Activated T-helper 2 cell treated with anti-CD3 and anti-CD28 coated beads, Interferon-gamma antibody, Interleukin-2, Interleukin-4, amounts not matched to agents 10 μg/mL and 5 μg/mL and 100 μg/mL, durations not matched to agents 14 hours and 24 hours and 36 hours (primary cell): ENCODE measurements at regions of chr2 and their contacts with region 1.

Region 1: GRCh38 chr2:156400706-156401678 is 35.2 kb upstream of the GPD2 start:
- DNase-seq: peak; percentile 65
- H3K4me3 Mint-ChIP-seq: peak overlapping the region; percentile 89
- H3K27ac Mint-ChIP-seq: peak overlapping the region; percentile 91
- H3K4me1 Mint-ChIP-seq: peaks cover 29% of the 10 kb centered on the region
- H3K27me3 Mint-ChIP-seq: no peaks in the 10 kb centered on the region

Region 2: GRCh38 chr2:156341452-156342253 is 59.3 kb before region 1 on chr2:
- intact Hi-C with region 1: loop called (anchors 1 kb)
- DNase-seq: peak; percentile 88
- H3K4me3 Mint-ChIP-seq: peak overlapping the region; percentile 87
- H3K27ac Mint-ChIP-seq: peak overlapping the region; percentile 94
- H3K4me1 Mint-ChIP-seq: peaks cover 48% of the 10 kb centered on the region
- H3K27me3 Mint-ChIP-seq: no peaks in the 10 kb centered on the region

Region 3: GRCh38 chr2:156385242-156385641 is 15.8 kb before region 1 on chr2:
- intact Hi-C with region 1: loop called (anchors 1 kb)
- DNase-seq: no peak
- H3K4me3 Mint-ChIP-seq: no peak overlapping the region
- H3K27ac Mint-ChIP-seq: peak overlapping the region; percentile 77
- H3K4me1 Mint-ChIP-seq: peaks cover 37% of the 10 kb centered on the region
- H3K27me3 Mint-ChIP-seq: no peaks in the 10 kb centered on the region

Region 4: GRCh38 chr2:156430236-156430979 is 29.4 kb after region 1 on chr2:
- intact Hi-C with region 1: no loop called
- DNase-seq: no peak
- H3K4me3 Mint-ChIP-seq: no peak overlapping the region
- H3K27ac Mint-ChIP-seq: no peak overlapping the region
- H3K4me1 Mint-ChIP-seq: peaks cover 19% of the 10 kb centered on the region
- H3K27me3 Mint-ChIP-seq: peaks cover under 1% of the 10 kb centered on the region

Region 5: DNA sequence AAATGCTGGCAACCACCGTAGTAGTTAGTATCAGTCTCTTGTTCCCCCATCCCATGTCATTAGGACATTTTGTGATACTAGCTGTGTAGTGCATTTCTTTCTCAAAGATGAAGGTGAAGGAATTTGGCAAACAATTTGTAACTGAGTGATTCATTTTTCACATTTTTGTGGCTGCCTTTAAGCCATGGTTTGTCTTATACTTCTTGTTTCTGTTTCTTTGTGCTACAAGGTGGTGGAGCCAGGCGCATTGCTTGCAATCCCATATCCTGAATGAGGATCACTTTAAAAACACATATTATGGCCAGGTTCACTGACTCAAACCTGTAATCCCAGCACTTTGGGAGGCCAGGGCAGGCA is 75.8 kb after region 1 on chr2:
- intact Hi-C with region 1: loop called (anchors 2 kb)
- DNase-seq: no peak
- H3K4me3 Mint-ChIP-seq: no peak overlapping the region
- H3K27ac Mint-ChIP-seq: peak overlapping the region; percentile 66
- H3K4me1 Mint-ChIP-seq: peaks cover 53% of the 10 kb centered on the region
- H3K27me3 Mint-ChIP-seq: no peaks in the 10 kb centered on the region

Region 6: GRCh38 chr2:156573710-156574109 is 172.7 kb after region 1 on chr2:
- intact Hi-C with region 1: no loop called
- DNase-seq: no peak
- H3K4me3 Mint-ChIP-seq: no peak overlapping the region
- H3K27ac Mint-ChIP-seq: no peak overlapping the region
- H3K4me1 Mint-ChIP-seq: peaks cover 21% of the 10 kb centered on the region
- H3K27me3 Mint-ChIP-seq: no peaks in the 10 kb centered on the region

Region 7: GRCh38 chr2:156892467-156893281 is 491.7 kb after region 1 on chr2:
- intact Hi-C with region 1: loop called (anchors 5 kb)
- DNase-seq: no peak
- H3K4me3 Mint-ChIP-seq: peak overlapping the region; percentile 27
- H3K27ac Mint-ChIP-seq: no peak overlapping the region
- H3K4me1 Mint-ChIP-seq: peaks cover 42% of the 10 kb centered on the region
- H3K27me3 Mint-ChIP-seq: peaks cover 55% of the 10 kb centered on the region